Activated CD4-positive, alpha-beta T cell treated with anti-CD3 and anti-CD28 coated beads, Interleukin-2, amount 10 ng/mL, durations not matched to agents 24 days and 14 days (primary cell): ENCODE measurements at regions of chr1 and their contacts with region 1.

Region 1: DNA sequence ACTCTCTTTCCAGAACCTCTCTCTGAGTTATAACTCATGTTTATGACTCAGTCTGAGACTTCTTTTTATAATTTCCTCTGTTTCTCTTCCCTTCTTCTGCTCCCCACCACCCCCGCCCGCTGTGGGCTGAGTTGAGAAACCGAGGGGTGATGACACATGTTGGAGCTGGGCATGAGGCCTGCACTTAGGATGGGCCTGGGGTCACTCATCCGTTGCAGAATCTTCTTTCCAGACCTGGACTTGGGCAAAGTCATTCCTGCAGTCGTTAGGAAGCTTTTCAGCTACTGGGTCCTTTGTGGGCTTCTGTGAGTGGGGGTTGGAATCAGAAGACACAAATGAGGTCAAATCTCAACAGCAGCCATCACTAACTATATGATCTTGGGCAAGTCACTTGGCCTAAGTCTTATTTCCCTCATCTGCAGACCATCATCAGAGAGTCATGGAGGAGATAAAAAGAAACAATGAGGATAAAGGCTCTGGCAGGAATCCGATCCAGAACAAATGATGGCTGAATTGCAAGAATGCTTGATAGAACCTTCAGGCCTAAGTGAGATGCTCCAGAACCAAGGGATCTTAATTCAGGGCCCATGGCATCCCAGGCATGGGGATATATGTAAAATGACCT is 53.4 kb downstream of the RPS6KA1 start:
- DNase-seq: peak; percentile 79
- H3K4me3 Mint-ChIP-seq: peak overlapping the region; percentile 47
- H3K27ac Mint-ChIP-seq: peak overlapping the region; percentile 92
- H3K4me1 Mint-ChIP-seq: peaks cover 48% of the 10 kb centered on the region
- H3K27me3 Mint-ChIP-seq: peaks cover 2% of the 10 kb centered on the region

Region 2: GRCh38 chr1:26472901-26473845 is 109.8 kb before region 1 on chr1:
- intact Hi-C with region 1: loop called (anchors 1 kb)
- DNase-seq: peak; percentile 99
- H3K4me3 Mint-ChIP-seq: peak overlapping the region; percentile 94
- H3K27ac Mint-ChIP-seq: peak overlapping the region; percentile 84
- H3K4me1 Mint-ChIP-seq: peaks cover 48% of the 10 kb centered on the region
- H3K27me3 Mint-ChIP-seq: peaks cover 2% of the 10 kb centered on the region

Region 3: DNA sequence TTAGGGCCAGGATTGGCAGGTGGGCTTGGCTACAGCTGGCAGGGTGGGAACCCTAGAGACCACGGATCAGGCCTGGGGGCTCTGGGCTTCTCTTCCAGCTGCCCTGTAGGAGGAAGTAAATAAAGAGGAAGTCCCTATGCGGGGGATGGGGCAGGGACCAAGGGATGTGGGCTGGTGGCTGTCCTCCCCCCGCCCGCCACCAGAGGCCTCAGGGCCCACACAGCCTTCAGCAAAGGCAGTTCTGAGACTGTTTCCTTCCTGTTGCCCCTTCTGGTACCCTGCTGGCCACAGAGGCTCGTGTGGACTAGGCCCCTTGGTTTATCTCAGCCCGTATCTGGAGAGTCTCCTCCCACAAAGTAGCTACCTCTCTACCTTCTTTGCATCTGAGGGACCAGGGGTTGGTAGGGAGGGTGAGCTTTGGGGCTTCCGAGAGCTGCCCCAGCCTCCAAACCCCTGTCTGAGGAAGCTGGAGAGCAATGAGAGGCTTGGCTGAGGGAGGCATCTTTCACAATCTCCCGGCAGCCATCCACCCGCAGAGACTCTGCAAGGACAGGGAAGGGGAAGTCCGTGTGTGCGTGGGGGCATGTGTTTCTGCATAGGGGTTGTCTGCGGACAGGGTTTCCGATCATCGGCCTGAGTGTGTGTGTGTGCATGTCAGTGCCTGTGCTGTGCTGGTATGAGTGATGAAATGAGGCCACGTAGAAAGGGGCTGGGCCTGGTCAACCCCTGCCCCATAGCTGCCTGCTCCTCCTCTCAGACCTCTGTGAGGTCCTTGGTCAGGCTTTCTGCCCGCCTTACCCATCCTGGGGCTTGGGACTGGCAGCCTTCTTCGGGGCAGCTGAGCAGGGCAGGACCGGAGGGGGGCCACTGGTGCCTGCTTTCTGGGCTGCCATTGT is 40.9 kb before region 1 on chr1:
- intact Hi-C with region 1: loop called (anchors 1 kb)
- DNase-seq: peak; percentile 93
- H3K4me3 Mint-ChIP-seq: peak overlapping the region; percentile 83
- H3K27ac Mint-ChIP-seq: peak overlapping the region; percentile 91
- H3K4me1 Mint-ChIP-seq: peaks cover 78% of the 10 kb centered on the region
- H3K27me3 Mint-ChIP-seq: no peaks in the 10 kb centered on the region

Region 4: DNA sequence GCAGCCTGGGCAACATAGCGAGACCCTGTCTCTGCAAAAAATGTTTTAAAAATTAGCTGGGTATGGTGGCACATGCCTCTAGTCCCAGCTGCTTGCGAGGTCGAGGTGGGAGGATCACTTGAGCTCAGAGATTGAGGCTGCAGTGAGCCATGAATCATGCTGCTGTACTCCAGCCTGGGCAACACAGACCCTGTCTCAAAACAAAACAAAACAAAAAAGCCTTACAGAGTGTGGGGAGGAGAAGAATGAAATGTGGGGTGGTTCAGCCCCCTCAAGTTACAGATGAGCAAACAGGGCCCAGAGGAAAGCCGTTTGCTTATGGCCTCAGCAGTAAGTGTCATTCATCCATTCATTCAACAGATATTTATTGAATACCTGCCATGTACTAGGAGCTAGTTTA is 12.7 kb before region 1 on chr1:
- intact Hi-C with region 1: loop called (anchors 1 kb)
- DNase-seq: no peak
- H3K4me3 Mint-ChIP-seq: no peak overlapping the region
- H3K27ac Mint-ChIP-seq: peak overlapping the region; percentile 63
- H3K4me1 Mint-ChIP-seq: peaks cover 32% of the 10 kb centered on the region
- H3K27me3 Mint-ChIP-seq: no peaks in the 10 kb centered on the region

Region 5: GRCh38 chr1:26602378-26602959 is 19.5 kb after region 1 on chr1:
- intact Hi-C with region 1: loop called (anchors 1 kb)
- DNase-seq: peak; percentile 89
- H3K4me3 Mint-ChIP-seq: no peak overlapping the region
- H3K27ac Mint-ChIP-seq: no peak overlapping the region
- H3K4me1 Mint-ChIP-seq: peaks cover 9% of the 10 kb centered on the region
- H3K27me3 Mint-ChIP-seq: peaks cover 3% of the 10 kb centered on the region

Region 6: GRCh38 chr1:26627954-26628353 is 45.0 kb after region 1 on chr1:
- intact Hi-C with region 1: no loop called
- DNase-seq: no peak
- H3K4me3 Mint-ChIP-seq: no peak overlapping the region
- H3K27ac Mint-ChIP-seq: no peak overlapping the region
- H3K4me1 Mint-ChIP-seq: no peaks in the 10 kb centered on the region
- H3K27me3 Mint-ChIP-seq: no peaks in the 10 kb centered on the region

Region 7: GRCh38 chr1:26695356-26696118 is 112.6 kb after region 1 on chr1 and contains the start of gene ARID1A:
- intact Hi-C with region 1: loop called (anchors 2 kb)
- DNase-seq: peak; percentile 99
- H3K4me3 Mint-ChIP-seq: peak within 1 kb of the TSS; percentile 94
- H3K27ac Mint-ChIP-seq: peak within 1 kb of the TSS; percentile 99
- H3K4me1 Mint-ChIP-seq: peaks cover 35% of the 10 kb centered on the region
- H3K27me3 Mint-ChIP-seq: no peaks in the 10 kb centered on the region
- total RNA-seq, gene ARID1A: 111 and 117 TPM in 2 replicates

Region 8: GRCh38 chr1:26744075-26744959 is 161.4 kb after region 1 on chr1:
- intact Hi-C with region 1: loop called (anchors 2 kb)
- DNase-seq: peak; percentile 95
- H3K4me3 Mint-ChIP-seq: peak overlapping the region; percentile 72
- H3K27ac Mint-ChIP-seq: peak overlapping the region; percentile 89
- H3K4me1 Mint-ChIP-seq: peaks cover 75% of the 10 kb centered on the region
- H3K27me3 Mint-ChIP-seq: no peaks in the 10 kb centered on the region